HEK293 (cell line): ENCODE measurements at regions of chr19 and their contacts with region 1.

Region 1: DNA sequence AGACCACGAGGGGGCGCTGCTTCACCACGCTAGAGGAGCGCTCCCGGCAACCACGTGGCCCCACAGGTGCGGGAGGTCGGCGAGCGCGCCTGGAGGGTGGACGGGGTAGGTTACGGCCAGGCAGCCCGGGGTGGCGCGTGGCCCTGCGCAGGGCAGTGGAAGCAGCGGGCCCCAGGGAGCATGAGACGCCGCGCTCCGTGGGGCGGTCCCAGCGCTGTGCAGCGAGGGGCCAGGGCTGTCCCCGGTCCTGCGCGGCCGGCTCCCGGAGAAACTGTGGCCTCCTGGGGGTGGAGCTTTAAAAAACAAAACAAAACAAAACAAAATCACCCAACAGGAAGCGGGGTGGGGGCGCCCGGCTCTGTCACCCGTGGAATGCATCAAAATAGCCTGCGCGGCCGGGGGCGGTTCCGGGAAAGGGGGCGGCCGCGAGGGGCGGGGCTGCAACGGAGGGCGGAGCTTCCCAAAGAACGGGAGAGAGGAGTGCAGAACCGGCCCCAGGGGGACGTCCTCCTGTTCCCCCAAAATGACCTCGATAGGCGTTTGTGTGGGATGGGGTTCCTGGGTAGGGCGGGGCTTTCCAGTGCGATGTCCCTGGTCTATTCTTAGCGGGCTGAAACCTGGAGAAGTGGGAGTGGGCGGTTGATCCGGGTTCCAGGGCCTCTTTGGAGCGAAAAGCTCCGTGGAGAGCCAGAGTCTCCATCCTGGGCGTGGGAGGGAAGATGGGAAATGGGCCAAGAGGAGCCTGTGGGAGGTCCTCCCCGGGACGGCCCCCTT is 27.3 kb downstream of the NUMBL start:
- H3K4me3 ChIP-seq: peak overlapping the region; percentile 56
- H3K27ac ChIP-seq: peak overlapping the region; percentile 89; the same call in 1 of the 2 replicates
- H3K4me1 ChIP-seq: peaks cover 13% of the 10 kb centered on the region
- CTCF ChIP-seq: peak; percentile 100

Region 2: GRCh38 chr19:40381321-40381720 is 281.8 kb before region 1 on chr19:
- CTCF ChIA-PET with region 1: no interaction called
- POLR2A ChIA-PET with region 1: no interaction called
- H3K4me3 ChIP-seq: no peak overlapping the region
- H3K27ac ChIP-seq: no peak overlapping the region
- H3K4me1 ChIP-seq: no peaks in the 10 kb centered on the region
- CTCF ChIP-seq: peak; percentile 61

Region 3: GRCh38 chr19:40510526-40511115 is 152.5 kb before region 1 on chr19:
- CTCF ChIA-PET with region 1: no interaction called
- POLR2A ChIA-PET with region 1: no interaction called
- H3K4me3 ChIP-seq: no peak overlapping the region
- H3K27ac ChIP-seq: no peak overlapping the region
- H3K4me1 ChIP-seq: no peaks in the 10 kb centered on the region
- CTCF ChIP-seq: no peak

Region 4: GRCh38 chr19:40640744-40641143 is 22.4 kb before region 1 on chr19:
- CTCF ChIA-PET with region 1: interaction called, 49 read pairs
- POLR2A ChIA-PET with region 1: interaction called, 5 read pairs
- H3K4me3 ChIP-seq: no peak overlapping the region
- H3K27ac ChIP-seq: no peak overlapping the region
- H3K4me1 ChIP-seq: peaks cover 10% of the 10 kb centered on the region
- CTCF ChIP-seq: no peak

Region 5: GRCh38 chr19:40702337-40703012 is 39.4 kb after region 1 on chr19:
- CTCF ChIA-PET with region 1: interaction called, 17 read pairs
- POLR2A ChIA-PET with region 1: interaction called, 4 read pairs
- H3K4me3 ChIP-seq: no peak overlapping the region
- H3K27ac ChIP-seq: no peak overlapping the region
- H3K4me1 ChIP-seq: no peaks in the 10 kb centered on the region
- CTCF ChIP-seq: peak; percentile 99

Region 6: DNA sequence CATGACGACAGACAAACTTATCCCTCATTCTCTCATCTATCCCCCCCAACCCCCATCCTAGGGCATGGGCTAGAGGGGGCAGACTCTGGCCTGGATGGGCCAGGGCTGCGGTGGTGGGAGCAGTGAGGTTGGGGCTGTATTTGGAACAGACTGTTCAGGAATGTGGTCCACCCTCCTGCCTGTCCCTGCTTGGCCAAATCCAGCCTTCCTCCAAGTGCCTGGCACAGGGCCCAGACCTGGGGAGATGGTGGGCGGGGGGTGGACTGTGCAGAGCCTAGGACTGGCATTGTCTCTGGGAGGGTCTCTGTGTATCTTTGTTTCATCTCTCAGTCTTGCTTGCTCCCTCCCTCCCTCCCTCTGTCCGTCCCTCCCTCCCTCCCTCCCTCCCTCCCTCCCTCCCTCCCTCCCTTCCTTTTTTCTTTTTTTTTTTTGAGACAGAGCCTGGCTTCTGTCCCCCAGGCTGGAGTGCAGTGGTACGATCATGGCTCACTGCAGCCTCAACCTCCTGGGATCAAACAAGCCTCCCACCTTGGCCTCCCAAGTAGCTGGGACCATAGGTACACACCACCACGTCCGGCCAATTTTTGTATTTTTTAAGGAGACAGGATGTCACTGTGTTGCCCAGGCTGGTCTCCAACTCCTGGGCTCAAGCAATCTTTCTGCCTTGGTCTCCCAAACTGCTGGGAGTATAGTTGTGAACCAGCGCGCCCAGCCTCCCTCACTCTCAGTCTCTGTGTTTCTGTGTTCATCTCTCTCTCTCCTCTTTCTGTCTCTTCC is 150.3 kb after region 1 on chr19:
- CTCF ChIA-PET with region 1: interaction called, 74 read pairs
- POLR2A ChIA-PET with region 1: interaction called, 14 read pairs
- H3K4me3 ChIP-seq: no peak overlapping the region
- H3K27ac ChIP-seq: no peak overlapping the region
- H3K4me1 ChIP-seq: peaks cover 10% of the 10 kb centered on the region
- CTCF ChIP-seq: no peak

Region 7: DNA sequence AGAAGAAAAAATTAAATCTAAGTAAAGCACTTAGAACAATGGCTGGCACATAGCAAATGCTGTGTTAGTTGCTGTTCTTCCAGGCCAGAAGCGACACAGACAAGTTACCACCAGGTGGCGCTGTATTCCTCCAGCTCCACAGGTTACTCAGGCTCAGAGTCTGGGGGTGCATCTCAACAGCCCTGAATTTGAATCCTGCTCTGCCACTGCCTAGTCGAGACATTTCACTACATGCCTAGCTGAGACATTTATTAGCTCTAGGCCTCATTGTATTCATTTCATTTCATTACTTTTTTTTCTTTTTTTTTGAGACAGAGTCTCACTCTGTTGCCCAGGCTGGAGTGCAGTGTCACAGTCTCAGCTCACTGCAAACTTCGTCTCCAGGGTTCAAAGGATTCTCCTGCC is 311.5 kb after region 1 on chr19:
- CTCF ChIA-PET with region 1: interaction called, 11 read pairs
- POLR2A ChIA-PET with region 1: interaction called, 3 read pairs
- H3K4me3 ChIP-seq: no peak overlapping the region
- H3K27ac ChIP-seq: no peak overlapping the region
- H3K4me1 ChIP-seq: no peaks in the 10 kb centered on the region
- CTCF ChIP-seq: peak; percentile 86